SK-N-SH (cell line): ENCODE measurements at regions of chr20 and their contacts with region 1.

Region 1: GRCh38 chr20:36153736-36154699 is 522 bp upstream of the EPB41L1 start:
- DNase-seq: peak; percentile 98
- H3K4me3 ChIP-seq: peak overlapping the region; percentile 88 to 89
- H3K27ac ChIP-seq: peak overlapping the region; percentile 8 to 50; a peak in 2 of 4 replicates
- H3K4me1 ChIP-seq: peaks cover 0 to 31% of the 10 kb centered on the region in 2 experiments; a peak in 2 of 4 replicates
- H3K27me3 ChIP-seq: no peaks in the 10 kb centered on the region
- CTCF ChIP-seq: no peak
- EP300 ChIP-seq: no peak
- RAD21 ChIP-seq: no peak

Region 2: DNA sequence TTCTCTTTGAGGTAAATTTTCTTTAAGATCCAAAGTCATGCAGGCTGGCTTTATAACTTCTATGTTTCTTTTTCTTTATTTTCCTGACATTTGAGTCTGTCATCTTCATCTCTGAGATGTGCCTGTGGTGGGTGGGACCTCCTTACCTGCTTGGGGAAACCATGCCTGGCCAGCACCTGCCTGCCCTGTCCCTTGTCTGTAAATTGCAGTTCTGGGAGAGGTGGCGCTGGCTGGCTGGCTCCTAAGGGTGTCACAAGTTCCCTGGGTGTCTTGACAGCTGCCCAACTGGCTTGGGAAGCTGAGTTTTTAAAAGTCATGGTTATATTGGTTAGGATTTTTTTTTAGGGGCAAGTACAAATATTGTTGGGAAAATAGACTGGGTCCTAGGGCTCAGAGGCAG is 236.0 kb before region 1 on chr20:
- CTCF ChIA-PET with region 1: no interaction called
- POLR2A ChIA-PET with region 1: no interaction called
- DNase-seq: no peak
- H3K4me3 ChIP-seq: no peak overlapping the region
- H3K27ac ChIP-seq: no peak overlapping the region
- H3K4me1 ChIP-seq: no peaks in the 10 kb centered on the region; a peak in 1 of 4 replicates
- H3K27me3 ChIP-seq: no peaks in the 10 kb centered on the region
- CTCF ChIP-seq: no peak
- EP300 ChIP-seq: no peak
- RAD21 ChIP-seq: no peak

Region 3: GRCh38 chr20:36167826-36168531 is 14.0 kb after region 1 on chr20:
- CTCF ChIA-PET with region 1: interaction called, 16 read pairs
- POLR2A ChIA-PET with region 1: no interaction called
- DNase-seq: no peak
- H3K4me3 ChIP-seq: no peak overlapping the region
- H3K27ac ChIP-seq: peak overlapping the region; percentile 11 to 44; a peak in 2 of 4 replicates
- H3K4me1 ChIP-seq: peaks cover 6 to 9% of the 10 kb centered on the region in 2 experiments; a peak in 3 of 4 replicates
- H3K27me3 ChIP-seq: no peaks in the 10 kb centered on the region
- CTCF ChIP-seq: no peak
- EP300 ChIP-seq: no peak
- RAD21 ChIP-seq: no peak

Region 4: GRCh38 chr20:36181934-36182603 is 28.1 kb after region 1 on chr20:
- CTCF ChIA-PET with region 1: interaction called, 16 read pairs
- POLR2A ChIA-PET with region 1: no interaction called
- DNase-seq: no peak
- H3K4me3 ChIP-seq: no peak overlapping the region
- H3K27ac ChIP-seq: no peak overlapping the region
- H3K4me1 ChIP-seq: peaks cover 0 to 14% of the 10 kb centered on the region in 2 experiments; a peak in 1 of 4 replicates
- H3K27me3 ChIP-seq: no peaks in the 10 kb centered on the region
- CTCF ChIP-seq: no peak
- EP300 ChIP-seq: no peak
- RAD21 ChIP-seq: no peak

Region 5: DNA sequence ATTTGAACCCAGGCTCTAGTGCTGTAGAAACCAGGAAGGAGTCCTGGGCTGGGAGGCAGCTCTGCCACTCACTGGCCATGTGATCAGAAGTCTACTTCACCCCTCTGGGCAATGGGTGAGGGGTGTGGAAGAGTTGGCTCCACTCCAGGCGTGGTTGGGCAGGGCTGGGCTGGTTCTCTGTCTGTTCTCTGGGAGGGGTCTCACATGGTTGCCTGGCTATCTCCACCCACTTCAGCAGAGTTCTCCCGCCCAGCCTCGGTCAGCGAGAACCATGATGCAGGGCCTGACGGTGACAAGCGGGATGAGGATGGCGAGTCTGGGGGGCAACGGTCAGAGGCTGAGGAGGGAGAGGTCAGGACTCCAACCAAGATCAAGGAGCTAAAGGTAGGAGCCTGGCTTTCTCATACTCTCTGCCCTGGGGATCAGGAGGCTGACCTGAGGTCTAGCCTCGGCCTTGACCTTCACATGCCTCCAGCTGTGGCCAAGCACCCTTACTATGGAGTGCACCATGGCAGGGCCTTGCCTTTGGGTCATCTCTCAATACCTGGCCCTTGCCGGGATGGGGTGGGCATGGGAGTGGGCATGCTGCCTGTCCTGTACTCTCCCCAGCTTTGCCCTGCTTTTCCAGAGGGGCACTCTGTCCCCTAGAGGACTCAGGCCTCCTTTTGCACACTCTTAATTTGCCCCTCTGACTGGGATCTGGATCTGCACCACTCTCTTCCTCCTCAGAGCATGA is 40.1 kb after region 1 on chr20:
- CTCF ChIA-PET with region 1: interaction called, 178 read pairs
- POLR2A ChIA-PET with region 1: interaction called, 3 read pairs
- DNase-seq: no peak
- H3K4me3 ChIP-seq: no peak overlapping the region
- H3K27ac ChIP-seq: no peak overlapping the region
- H3K4me1 ChIP-seq: peaks cover 0 to 6% of the 10 kb centered on the region in 2 experiments; a peak in 2 of 4 replicates
- H3K27me3 ChIP-seq: no peaks in the 10 kb centered on the region
- CTCF ChIP-seq: no peak
- EP300 ChIP-seq: no peak
- RAD21 ChIP-seq: no peak